Mammary epithelial cell (primary cell): ENCODE measurements at regions of chr15 and their contacts with region 1.

Region 1: DNA sequence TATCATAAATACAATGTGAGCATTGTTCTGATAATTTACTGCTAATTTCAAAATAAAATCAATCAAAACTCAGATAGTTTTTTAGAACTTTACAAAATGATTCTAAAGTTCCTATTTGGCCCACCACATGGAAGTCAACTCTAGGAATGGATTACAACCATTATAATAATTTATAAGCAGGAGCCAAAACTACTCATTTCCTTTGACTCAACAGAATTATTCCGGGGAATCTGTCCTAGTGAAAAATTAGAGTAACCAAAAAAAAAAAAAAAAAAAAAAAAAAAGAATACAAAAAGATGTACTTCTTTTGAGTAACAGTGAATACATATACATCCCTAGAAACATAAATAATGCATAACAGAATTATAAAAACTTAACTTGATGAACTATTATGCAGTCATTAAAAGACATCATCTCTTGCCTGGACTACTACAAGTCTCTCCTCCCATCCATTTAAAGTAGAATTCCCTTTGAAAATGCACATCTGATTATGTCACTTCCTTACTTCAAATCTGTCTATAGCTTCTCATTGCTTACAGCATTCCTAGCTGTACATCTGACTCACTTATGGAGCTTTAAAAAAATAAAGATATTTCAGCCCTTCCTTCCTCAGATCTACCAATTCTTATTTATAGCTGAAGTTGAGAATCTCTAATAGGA is 43.4 kb downstream of the HDGFL3 start:
- DNase-seq: peak; percentile 19
- H3K4me3 ChIP-seq: no peak overlapping the region
- H3K27ac ChIP-seq: no peak overlapping the region
- H3K4me1 ChIP-seq: peaks cover 8% of the 10 kb centered on the region
- H3K27me3 ChIP-seq: no peaks in the 10 kb centered on the region
- CTCF ChIP-seq: no peak

Region 2: GRCh38 chr15:82849556-82850512 is 314.4 kb before region 1 on chr15:
- CTCF ChIA-PET with region 1: no interaction called
- dilution Hi-C with region 1: no loop called
- in situ Hi-C with region 1: no loop called
- intact Hi-C with region 1: no loop called
- DNase-seq: peak; percentile 42
- H3K4me3 ChIP-seq: no peak overlapping the region
- H3K27ac ChIP-seq: no peak overlapping the region
- H3K4me1 ChIP-seq: peaks cover under 1% of the 10 kb centered on the region
- H3K27me3 ChIP-seq: no peaks in the 10 kb centered on the region
- CTCF ChIP-seq: peak; percentile 50 to 66

Region 3: GRCh38 chr15:83092309-83092976 is 71.8 kb before region 1 on chr15:
- CTCF ChIA-PET with region 1: no interaction called
- dilution Hi-C with region 1: no loop called
- in situ Hi-C with region 1: no loop called
- intact Hi-C with region 1: no loop called
- DNase-seq: peak; percentile 27
- H3K4me3 ChIP-seq: no peak overlapping the region
- H3K27ac ChIP-seq: no peak overlapping the region
- H3K4me1 ChIP-seq: no peaks in the 10 kb centered on the region
- H3K27me3 ChIP-seq: no peaks in the 10 kb centered on the region
- CTCF ChIP-seq: no peak

Region 4: GRCh38 chr15:83207622-83208411 is 43.6 kb after region 1 on chr15 and contains the start of gene HDGFL3:
- CTCF ChIA-PET with region 1: no interaction called
- dilution Hi-C with region 1: no loop called
- in situ Hi-C with region 1: no loop called
- intact Hi-C with region 1: loop called (anchors 2 kb)
- DNase-seq: peak; percentile 57
- H3K4me3 ChIP-seq: peak within 1 kb of the TSS; percentile 84 to 88 (median 85)
- H3K27ac ChIP-seq: peak within 1 kb of the TSS; percentile 61
- H3K4me1 ChIP-seq: peaks cover 26% of the 10 kb centered on the region
- H3K27me3 ChIP-seq: no peaks in the 10 kb centered on the region
- CTCF ChIP-seq: peak in 1 of 2 donors; percentile 27
- total RNA-seq, gene HDGFL3: 22.7 to 79.2 TPM